Esophagus squamous epithelium (tissue), 5 donors: ENCODE measurements at regions of chr17 and their contacts with region 1.

Region 1: DNA sequence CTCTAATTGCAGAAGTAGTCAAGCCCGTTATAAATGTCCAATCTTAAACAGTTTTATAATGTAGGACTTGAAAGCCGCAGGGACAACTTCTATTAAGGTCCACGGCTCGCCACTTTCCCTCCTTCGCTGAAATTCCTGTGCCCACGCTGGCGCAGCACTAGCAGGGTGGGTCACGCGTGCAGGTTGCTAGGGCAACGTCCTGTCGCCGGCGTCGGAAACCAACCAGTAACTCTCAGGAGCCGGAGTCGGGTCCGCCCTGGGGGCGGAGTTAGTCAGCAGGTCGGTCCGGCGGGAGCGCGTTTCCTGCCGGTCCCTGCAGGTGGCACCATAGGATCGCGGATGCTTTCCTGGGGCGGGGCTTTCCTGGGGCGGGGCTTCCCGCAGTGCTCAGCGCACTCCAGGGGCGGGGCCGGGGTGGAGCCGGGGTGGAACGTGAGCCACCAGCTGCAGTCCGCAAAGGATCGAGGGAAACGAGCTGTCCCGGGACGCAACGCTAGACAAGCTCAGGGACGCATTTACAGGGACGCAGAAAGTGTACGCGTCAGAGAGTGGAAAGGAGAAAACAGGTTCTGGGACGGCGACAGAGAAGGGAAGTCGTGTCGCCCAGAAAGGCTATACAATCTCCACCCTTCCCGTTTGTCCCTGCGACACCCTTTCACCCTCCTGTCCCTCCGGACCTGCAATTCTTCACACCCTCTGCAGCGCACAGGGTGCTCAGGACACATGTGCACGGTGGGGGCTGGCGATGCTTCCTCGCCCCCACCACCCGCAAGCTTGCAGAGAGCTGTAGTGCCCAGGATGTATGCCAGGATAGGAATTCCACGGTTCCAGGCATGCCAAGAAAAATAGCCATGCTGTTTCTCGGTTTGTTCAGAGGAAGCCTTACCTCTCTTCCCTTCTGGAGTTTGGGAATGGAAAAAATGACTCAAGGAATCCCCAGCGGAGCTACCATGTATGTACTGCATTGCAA is 12.4 kb downstream of the COPZ2 start:
- DNase-seq: peak; percentile 86
- H3K4me3 ChIP-seq: peak overlapping the region; percentile 29 to 70 (median 48)
- H3K27ac ChIP-seq: peak overlapping the region; percentile 45 to 88 (median 78)
- H3K4me1 ChIP-seq: peaks cover 34 to 46% (median 37%) of the 10 kb centered on the region in 3 donors
- H3K27me3 ChIP-seq: peaks cover 0 to 28% (median 0%) of the 10 kb centered on the region in 4 donors
- CTCF ChIP-seq: peak; percentile 75 to 89 (median 84)
- POLR2A ChIP-seq: peak in 1 of 4 donors; percentile 37

Region 2: DNA sequence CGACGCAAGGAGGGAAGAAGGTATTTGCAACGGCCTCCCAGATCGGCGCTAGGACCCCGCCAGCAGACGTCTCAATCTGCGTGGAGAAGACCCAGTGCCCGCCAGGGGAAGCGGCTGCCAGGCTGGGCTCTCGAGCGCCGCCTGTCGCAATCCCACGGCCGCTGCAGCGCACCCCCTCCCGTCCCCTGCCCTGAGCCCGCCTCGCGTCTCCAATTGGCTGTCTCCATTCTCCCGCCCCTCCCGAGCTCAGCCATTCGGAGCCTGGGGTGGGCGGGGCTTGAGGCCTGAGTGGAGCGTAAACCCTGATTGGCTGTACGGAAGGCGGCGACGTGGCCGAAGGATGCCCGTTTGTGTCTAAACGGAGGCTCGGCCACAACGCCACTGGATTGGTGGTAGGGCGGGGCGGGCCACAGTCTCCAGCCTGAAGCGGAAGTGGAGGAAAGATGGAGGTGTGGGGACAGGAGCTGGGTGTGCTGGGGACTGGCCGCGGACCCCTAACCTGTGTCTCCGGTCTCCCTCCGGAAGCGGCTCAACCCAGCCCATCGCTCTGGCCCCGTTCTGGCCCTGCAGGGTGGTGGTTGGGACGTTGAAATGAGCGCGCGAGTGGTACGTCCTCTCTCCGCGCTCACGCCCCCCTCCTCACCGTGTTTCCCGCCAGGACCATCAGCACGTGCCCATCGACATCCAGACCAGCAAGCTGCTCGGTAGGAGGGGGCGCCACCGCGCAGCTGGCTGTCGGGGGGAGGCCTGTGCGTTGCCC is 54.3 kb before region 1 on chr17 and contains the start of gene CDK5RAP3:
- intact Hi-C with region 1: no loop called
- DNase-seq: peak; percentile 99
- H3K4me3 ChIP-seq: peak within 1 kb of the TSS; percentile 57 to 93 (median 88)
- H3K27ac ChIP-seq: peak within 1 kb of the TSS; percentile 83 to 93 (median 88)
- H3K4me1 ChIP-seq: peaks cover 17 to 55% (median 21%) of the 10 kb centered on the region in 3 donors
- H3K27me3 ChIP-seq: no peaks in the 10 kb centered on the region
- CTCF ChIP-seq: peak; percentile 89 to 99 (median 98)
- POLR2A ChIP-seq: peak in 2 of 4 donors; percentile 75 to 80
- total RNA-seq, gene CDK5RAP3: 60.1 to 141 (median 66.0) TPM

Region 3: GRCh38 chr17:48074315-48075081 is 49.3 kb after region 1 on chr17:
- intact Hi-C with region 1: loop called (anchors 5 kb)
- DNase-seq: no peak
- H3K4me3 ChIP-seq: no peak overlapping the region
- H3K27ac ChIP-seq: peak overlapping the region in 2 of 4 donors; percentile 15 to 36
- H3K4me1 ChIP-seq: peaks cover 0 to 10% (median 0%) of the 10 kb centered on the region in 3 donors
- H3K27me3 ChIP-seq: no peaks in the 10 kb centered on the region
- CTCF ChIP-seq: peak; percentile 56 to 91 (median 86)
- POLR2A ChIP-seq: no peak

Region 4: GRCh38 chr17:48131216-48131824 is 106.1 kb after region 1 on chr17:
- intact Hi-C with region 1: loop called (anchors 5 kb)
- DNase-seq: no peak
- H3K4me3 ChIP-seq: no peak overlapping the region
- H3K27ac ChIP-seq: no peak overlapping the region
- H3K4me1 ChIP-seq: peaks cover 0 to 19% (median 3%) of the 10 kb centered on the region in 3 donors
- H3K27me3 ChIP-seq: no peaks in the 10 kb centered on the region
- CTCF ChIP-seq: peak; percentile 59 to 83 (median 79)
- POLR2A ChIP-seq: no peak